Common myeloid progenitor, CD34-positive (primary cell): ENCODE measurements at regions of chr14 and their contacts with region 1.

Region 1: GRCh38 chr14:35229495-35230089 is 62.6 kb upstream of the PSMA6 start:
- DNase-seq: peak; percentile 36 to 69 (median 69)
- H3K4me3 ChIP-seq: no peak overlapping the region
- H3K27ac ChIP-seq: no peak overlapping the region
- H3K4me1 ChIP-seq: peaks cover 20 to 48% (median 35%) of the 10 kb centered on the region in 4 experiments
- H3K27me3 ChIP-seq: no peaks in the 10 kb centered on the region

Region 2: GRCh38 chr14:35215110-35215876 is 14.3 kb before region 1 on chr14:
- CTCF ChIA-PET with region 1: interaction called, 30 read pairs
- POLR2A ChIA-PET with region 1: no interaction called
- DNase-seq: peak; percentile 34 to 62 (median 58)
- H3K4me3 ChIP-seq: no peak overlapping the region
- H3K27ac ChIP-seq: no peak overlapping the region
- H3K4me1 ChIP-seq: peaks cover 0 to 2% (median 0%) of the 10 kb centered on the region in 4 experiments
- H3K27me3 ChIP-seq: no peaks in the 10 kb centered on the region

Region 3: DNA sequence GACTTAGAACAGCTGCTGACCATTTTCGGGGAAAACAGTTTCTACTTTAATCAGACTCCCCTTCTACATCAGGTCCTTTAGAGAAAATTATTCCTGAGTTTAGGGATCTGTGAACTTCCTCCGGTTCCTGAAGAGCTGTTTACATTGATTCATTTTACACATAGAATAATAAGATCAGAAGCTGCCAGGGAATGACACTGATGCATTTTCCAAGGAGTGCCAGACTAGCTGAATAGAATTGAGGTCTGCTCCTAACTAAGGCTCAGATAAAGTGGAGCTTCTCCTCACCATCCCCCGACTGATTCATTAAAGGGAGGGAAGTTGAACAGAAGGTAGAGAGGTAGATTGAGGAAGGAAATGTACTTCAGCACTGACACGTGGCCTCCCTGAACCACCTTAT is 20.7 kb after region 1 on chr14:
- CTCF ChIA-PET with region 1: interaction called, 11 read pairs
- POLR2A ChIA-PET with region 1: no interaction called
- DNase-seq: no peak
- H3K4me3 ChIP-seq: no peak overlapping the region
- H3K27ac ChIP-seq: no peak overlapping the region
- H3K4me1 ChIP-seq: peaks cover 10 to 30% (median 20%) of the 10 kb centered on the region in 4 experiments
- H3K27me3 ChIP-seq: no peaks in the 10 kb centered on the region

Region 4: GRCh38 chr14:35277179-35277578 is 47.6 kb after region 1 on chr14:
- CTCF ChIA-PET with region 1: interaction called, 12 read pairs
- POLR2A ChIA-PET with region 1: no interaction called
- DNase-seq: no peak
- H3K4me3 ChIP-seq: no peak overlapping the region
- H3K27ac ChIP-seq: peak overlapping the region in 1 of 2 experiments; percentile 30
- H3K4me1 ChIP-seq: peaks cover 0 to 16% (median 7%) of the 10 kb centered on the region in 4 experiments
- H3K27me3 ChIP-seq: no peaks in the 10 kb centered on the region

Region 5: DNA sequence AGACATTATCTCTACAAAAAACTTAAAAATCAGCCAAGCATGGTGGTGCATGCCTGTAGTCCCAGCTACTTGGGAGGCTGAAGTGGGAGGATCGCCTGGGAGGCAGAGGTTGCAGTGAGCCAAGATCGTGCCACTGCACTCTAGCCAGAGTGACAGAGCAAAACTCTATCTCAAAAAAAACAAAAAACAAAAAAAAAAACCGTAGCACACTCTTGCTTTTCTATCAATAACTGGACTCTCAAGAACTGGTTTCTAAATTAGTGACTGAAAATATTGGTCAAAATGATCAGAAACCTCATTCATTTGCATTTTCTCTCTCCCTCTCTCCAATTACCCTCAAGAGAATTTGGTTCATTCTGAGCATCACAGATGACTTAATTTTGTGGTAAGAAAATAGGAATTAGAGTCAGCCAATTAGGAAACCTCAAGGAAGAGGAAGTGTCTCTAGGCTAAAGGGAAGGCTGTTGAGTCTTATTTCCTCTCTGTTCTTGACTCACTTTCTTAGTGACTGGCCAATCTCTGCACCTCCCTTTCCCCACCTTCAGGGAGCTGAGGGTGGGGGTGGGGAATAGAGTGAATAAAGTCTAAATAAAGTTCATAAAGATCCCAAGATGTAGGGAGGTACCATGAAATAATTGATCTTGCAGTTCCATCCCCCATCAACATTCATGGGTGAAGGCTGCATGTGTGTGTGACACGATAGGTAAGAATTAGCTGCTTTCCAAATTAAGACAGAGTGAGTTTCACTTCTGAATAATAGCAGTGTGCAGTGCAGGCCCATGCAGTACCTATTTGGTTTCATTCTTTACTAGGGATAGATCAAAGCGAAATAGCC is 55.8 kb after region 1 on chr14:
- CTCF ChIA-PET with region 1: interaction called, 25 read pairs
- POLR2A ChIA-PET with region 1: no interaction called
- DNase-seq: peak; percentile 78 to 90 (median 85)
- H3K4me3 ChIP-seq: peak overlapping the region in 6 of 7 experiments; percentile 39 to 66 (median 53)
- H3K27ac ChIP-seq: peak overlapping the region; percentile 77 to 89
- H3K4me1 ChIP-seq: peaks cover 52 to 92% (median 68%) of the 10 kb centered on the region in 4 experiments
- H3K27me3 ChIP-seq: no peaks in the 10 kb centered on the region

Region 6: DNA sequence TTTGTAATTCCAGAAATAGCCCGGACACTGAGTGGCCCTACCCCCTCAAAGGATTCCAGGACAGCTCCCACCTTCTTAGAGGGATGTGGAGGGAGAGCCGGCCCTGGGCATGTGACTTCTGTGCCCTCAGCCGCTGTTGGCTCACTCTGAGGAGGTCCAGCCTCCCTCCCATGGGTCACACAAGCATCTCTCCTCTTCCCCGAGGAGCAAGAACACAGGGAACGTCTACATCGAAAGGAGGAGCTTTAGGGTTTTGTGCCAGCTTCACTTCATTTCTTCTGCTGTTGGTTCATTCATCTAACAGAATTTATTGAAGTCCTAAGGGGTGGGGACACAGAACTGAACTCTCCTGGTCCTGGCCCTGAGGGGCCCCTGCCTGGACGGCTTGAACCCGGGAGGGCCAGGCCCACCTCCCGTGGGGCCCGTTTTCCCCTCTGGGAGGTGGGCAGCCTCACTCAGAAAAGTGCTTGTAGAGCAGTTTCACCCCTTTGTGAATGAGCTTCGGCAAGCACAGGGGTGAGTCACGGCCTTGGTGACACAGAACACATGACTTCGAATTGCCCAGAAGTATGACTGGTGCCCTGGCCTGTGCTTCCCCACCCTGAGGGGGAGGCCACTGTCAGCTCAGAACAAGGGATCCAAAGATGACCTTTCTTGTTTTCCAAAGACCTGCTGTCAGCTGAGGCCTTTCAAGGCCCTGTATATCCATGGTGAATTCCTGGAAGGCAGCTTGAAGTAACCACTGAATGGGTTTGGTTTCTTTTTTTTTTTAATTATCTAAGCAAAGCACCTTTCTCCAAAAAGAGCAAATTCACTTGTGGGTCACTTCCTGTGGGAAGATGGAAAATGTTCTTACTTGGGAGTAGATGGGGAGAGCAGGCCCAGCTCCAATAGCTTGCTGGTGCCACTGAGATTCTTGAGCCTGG is 135.8 kb after region 1 on chr14:
- CTCF ChIA-PET with region 1: interaction called, 14 read pairs
- POLR2A ChIA-PET with region 1: no interaction called
- DNase-seq: peak; percentile 77 to 94 (median 92)
- H3K4me3 ChIP-seq: peak overlapping the region in 1 of 7 experiments; percentile 28
- H3K27ac ChIP-seq: peak overlapping the region; percentile 89 to 91
- H3K4me1 ChIP-seq: peaks cover 18 to 63% (median 59%) of the 10 kb centered on the region in 4 experiments
- H3K27me3 ChIP-seq: no peaks in the 10 kb centered on the region

Region 7: GRCh38 chr14:35416108-35416750 is 186.6 kb after region 1 on chr14:
- CTCF ChIA-PET with region 1: interaction called, 32 read pairs
- POLR2A ChIA-PET with region 1: no interaction called
- DNase-seq: peak in 2 of 3 donors; percentile 25 to 31
- H3K4me3 ChIP-seq: peak overlapping the region in 4 of 7 experiments; percentile 2 to 41 (median 20)
- H3K27ac ChIP-seq: peak overlapping the region in 1 of 2 experiments; percentile 49
- H3K4me1 ChIP-seq: peaks cover 0 to 22% (median 18%) of the 10 kb centered on the region in 4 experiments
- H3K27me3 ChIP-seq: no peaks in the 10 kb centered on the region